ENCODE measurements at regions of chr12 and their contacts with region 1.

Region 1: DNA sequence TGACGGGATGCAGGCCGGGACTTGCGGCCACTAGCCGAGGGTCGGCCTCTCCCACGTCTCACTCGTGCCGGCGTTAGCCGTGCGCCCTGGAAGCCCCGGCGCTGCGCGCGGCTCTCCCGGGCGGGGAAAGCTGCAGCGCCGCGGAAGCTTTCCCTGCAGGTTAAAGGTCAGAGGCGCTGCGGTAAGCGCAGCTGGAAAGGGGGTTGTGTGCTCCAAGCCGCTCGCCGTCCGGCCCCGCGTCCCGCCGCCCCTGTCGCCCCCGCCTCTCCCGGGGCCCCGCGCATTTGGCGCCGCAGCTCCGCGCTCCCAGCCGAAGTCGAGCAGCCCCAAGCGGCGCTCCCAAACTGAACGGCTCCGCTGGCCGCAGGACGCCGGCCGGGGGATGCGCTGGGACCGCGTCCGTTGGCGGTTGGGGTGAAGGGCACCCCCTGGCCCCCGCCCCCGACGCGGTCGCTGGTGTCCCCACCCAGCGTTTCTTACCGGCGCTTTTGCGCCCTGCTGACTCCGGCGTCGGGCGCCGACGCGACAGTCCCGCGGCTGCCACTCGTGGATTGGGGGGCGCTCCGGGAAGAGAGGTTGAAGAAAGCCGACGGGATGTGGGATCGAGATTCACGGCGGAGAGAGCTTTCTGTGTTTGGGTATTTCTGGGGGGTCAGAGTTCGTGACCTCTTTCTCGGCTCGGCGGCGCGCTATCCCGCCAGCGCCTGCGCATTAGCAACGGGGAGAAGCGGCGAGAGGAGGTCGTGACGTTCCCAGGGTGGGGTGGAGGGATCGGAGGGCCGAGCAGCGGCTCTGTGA is at the start of gene NR2C1:
- DNase-seq: peak; percentile 96 to 98 (median 96)
- ATAC-seq: peak; percentile 94
- H3K4me3 ChIP-seq: peak within 1 kb of the TSS; percentile 95
- H3K27ac ChIP-seq: peak within 1 kb of the TSS; percentile 91
- H3K4me1 ChIP-seq: peaks cover 6 to 16% of the 10 kb centered on the region in 2 experiments; a peak in 4 of 5 replicates
- H3K27me3 ChIP-seq: no peaks in the 10 kb centered on the region
- CTCF ChIP-seq: no peak
- EP300 ChIP-seq: peak; percentile 16; the same call in 1 of the 2 replicates
- POLR2A ChIP-seq: peak; percentile 84
- RAD21 ChIP-seq: no peak
- polyA plus RNA-seq, gene NR2C1: 8.5 to 12.8 TPM

Region 2: DNA sequence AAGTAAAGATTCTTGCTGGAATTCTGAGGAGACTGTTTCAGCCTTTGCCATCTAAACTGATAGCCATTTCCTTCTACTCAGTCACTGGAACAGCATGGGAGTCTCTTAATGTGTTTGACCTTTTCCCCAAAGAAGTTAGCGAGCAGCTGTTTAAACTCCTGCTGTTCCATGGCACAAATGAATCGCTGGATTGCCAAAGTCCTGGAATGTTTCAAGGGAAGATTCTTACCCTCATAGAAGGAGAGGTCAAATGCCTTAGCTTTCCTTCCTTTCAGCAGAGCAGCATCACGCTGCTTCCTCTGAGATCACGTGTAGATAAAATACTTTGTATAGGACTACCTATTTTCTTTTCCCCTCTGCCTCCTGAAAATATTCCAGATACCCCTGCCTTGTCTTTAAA is 10.8 kb after region 1 on chr12:
- CTCF ChIA-PET with region 1: no interaction called
- POLR2A ChIA-PET with region 1: interaction called, 10 read pairs
- in situ Hi-C with region 1: no loop called
- intact Hi-C with region 1: no loop called
- DNase-seq: no peak
- ATAC-seq: no peak
- H3K4me3 ChIP-seq: no peak overlapping the region
- H3K27ac ChIP-seq: no peak overlapping the region
- H3K4me1 ChIP-seq: no peaks in the 10 kb centered on the region; a peak in 1 of 5 replicates
- H3K27me3 ChIP-seq: no peaks in the 10 kb centered on the region
- CTCF ChIP-seq: no peak
- EP300 ChIP-seq: no peak
- POLR2A ChIP-seq: no peak
- RAD21 ChIP-seq: no peak

Region 3: DNA sequence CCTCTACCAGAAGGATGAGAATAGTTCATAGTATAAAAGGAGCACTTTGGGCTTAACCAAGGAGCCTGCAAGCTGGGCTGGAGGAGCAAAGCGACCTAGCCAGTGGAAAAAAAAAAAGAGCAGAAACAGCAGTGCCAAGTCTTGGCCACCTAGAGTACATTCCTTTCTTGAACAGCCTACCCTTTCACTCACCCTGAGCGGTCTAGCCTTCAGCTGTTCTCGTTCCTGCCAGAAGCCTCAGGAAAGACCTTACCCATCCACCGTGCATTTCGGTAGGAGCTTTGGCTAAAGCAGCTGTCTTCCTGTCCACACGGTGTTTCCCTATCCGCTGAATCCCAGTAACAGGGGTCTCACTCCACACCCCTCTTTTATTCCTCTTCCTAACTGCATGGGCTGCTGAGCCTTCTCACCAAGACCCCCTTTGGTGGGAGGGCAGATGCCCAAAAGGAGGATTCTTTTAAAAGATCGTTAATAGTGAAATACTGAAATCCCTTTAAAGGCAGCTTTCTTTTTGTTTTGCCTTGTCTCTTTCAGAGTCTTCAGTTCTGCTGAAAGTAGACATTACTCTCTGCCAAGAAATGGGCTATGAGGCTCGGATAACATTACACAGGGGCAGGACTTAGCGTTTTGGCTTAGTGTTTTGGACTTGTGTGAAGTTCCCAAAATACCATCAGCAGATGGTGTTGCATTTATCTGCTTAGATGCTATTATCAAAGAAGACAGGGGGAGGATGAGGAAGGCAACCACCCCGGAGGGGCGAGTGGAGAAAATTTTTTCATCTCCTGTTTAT is 312.3 kb after region 1 on chr12:
- CTCF ChIA-PET with region 1: no interaction called
- POLR2A ChIA-PET with region 1: no interaction called
- in situ Hi-C with region 1: no loop called
- intact Hi-C with region 1: no loop called
- DNase-seq: peak in 1 of 4 experiments; percentile 21
- ATAC-seq: peak; percentile 72
- H3K4me3 ChIP-seq: no peak overlapping the region
- H3K27ac ChIP-seq: no peak overlapping the region
- H3K4me1 ChIP-seq: peaks cover 0 to 7% of the 10 kb centered on the region in 2 experiments; a peak in 2 of 5 replicates
- H3K27me3 ChIP-seq: no peaks in the 10 kb centered on the region; a peak in 1 of 5 replicates
- CTCF ChIP-seq: no peak
- EP300 ChIP-seq: no peak
- POLR2A ChIP-seq: no peak
- RAD21 ChIP-seq: no peak